Left colon (tissue), 2 donors: ENCODE measurements at regions of chr14 and their contacts with region 1.

Region 1: GRCh38 chr14:21098076-21098891 is at the start of gene ZNF219:
- DNase-seq: peak; percentile 79 to 80
- ATAC-seq: peak; percentile 42
- total RNA-seq, gene ZNF219: 51.1 to 53.7 TPM

Region 2: GRCh38 chr14:21024585-21025370 is 73.5 kb before region 1 on chr14 and contains the start of gene NDRG2:
- intact Hi-C with region 1: loop called (anchors 5 to 10 kb)
- DNase-seq: peak; percentile 88 to 92
- ATAC-seq: peak; percentile 88
- total RNA-seq, gene NDRG2: 135 to 140 TPM

Region 3: DNA sequence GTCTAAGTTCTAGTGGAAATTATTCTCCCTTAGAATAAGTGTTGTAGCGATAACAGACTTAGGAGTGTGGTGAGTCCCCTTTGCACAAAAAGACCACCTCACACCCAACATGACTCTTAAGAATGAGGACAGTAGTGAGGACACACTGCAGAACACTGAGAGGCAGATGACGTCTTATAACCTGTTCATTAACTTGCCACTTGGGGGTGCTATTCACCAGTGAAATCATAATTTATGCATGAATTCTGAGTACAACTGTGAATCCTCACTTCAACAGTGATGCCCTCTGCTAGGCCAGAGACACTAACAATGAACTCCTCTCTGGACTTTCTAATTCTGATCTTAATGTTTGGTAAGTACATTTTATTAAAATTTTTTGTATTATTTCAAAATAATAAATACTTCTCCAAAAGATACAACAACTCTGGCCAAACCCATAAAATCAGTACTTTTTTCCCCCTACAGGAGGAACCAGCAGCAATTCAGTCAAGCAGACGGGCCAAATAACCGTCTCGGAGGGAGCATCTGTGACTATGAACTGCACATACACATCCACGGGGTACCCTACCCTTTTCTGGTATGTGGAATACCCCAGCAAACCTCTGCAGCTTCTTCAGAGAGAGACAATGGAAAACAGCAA is 1216.0 kb after region 1 on chr14:
- intact Hi-C with region 1: no loop called
- DNase-seq: no peak
- ATAC-seq: peak; percentile 74